ENCODE measurements at regions of chr11 and their contacts with region 1.

Region 1: DNA sequence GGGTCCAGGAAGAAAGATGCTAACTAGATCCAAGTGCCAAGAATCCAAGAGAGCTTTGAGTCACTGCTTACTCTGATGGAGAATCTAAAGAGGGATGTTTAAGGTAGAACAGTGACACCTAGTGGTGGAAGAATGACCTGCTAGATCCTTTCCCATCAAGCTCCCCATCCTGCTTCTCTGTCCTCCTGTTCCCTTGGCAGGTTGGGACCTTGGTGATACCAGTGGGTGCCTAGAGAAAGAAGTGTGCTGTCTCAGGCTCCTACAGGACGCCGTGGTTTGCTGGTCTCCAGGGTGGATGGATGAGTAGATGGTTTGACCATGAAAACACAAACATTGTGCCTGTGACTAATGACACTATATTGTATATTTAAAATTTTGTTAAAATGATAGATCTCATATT is 383.7 kb downstream of the TMEM135 start:
- DNase-seq: peak; percentile 44 to 60
- H3K4me3 ChIP-seq: no peak overlapping the region
- H3K27ac ChIP-seq: no peak overlapping the region
- H3K4me1 ChIP-seq: no peaks in the 10 kb centered on the region
- H3K27me3 ChIP-seq: no peaks in the 10 kb centered on the region
- CTCF ChIP-seq: peak; percentile 15 to 86 (median 54)
- EP300 ChIP-seq: no peak
- POLR2A ChIP-seq: no peak
- RAD21 ChIP-seq: peak; percentile 86 to 87

Region 2: GRCh38 chr11:86818466-86819192 is 602.8 kb before region 1 on chr11:
- CTCF ChIA-PET with region 1: no interaction called
- POLR2A ChIA-PET with region 1: no interaction called
- DNase-seq: no peak
- H3K4me3 ChIP-seq: no peak overlapping the region
- H3K27ac ChIP-seq: no peak overlapping the region
- H3K4me1 ChIP-seq: no peaks in the 10 kb centered on the region
- H3K27me3 ChIP-seq: no peaks in the 10 kb centered on the region
- CTCF ChIP-seq: peak in 2 of 3 experiments; percentile 64 to 79; a peak in 3 of 4 replicates
- EP300 ChIP-seq: no peak
- POLR2A ChIP-seq: no peak
- RAD21 ChIP-seq: peak; percentile 90

Region 3: DNA sequence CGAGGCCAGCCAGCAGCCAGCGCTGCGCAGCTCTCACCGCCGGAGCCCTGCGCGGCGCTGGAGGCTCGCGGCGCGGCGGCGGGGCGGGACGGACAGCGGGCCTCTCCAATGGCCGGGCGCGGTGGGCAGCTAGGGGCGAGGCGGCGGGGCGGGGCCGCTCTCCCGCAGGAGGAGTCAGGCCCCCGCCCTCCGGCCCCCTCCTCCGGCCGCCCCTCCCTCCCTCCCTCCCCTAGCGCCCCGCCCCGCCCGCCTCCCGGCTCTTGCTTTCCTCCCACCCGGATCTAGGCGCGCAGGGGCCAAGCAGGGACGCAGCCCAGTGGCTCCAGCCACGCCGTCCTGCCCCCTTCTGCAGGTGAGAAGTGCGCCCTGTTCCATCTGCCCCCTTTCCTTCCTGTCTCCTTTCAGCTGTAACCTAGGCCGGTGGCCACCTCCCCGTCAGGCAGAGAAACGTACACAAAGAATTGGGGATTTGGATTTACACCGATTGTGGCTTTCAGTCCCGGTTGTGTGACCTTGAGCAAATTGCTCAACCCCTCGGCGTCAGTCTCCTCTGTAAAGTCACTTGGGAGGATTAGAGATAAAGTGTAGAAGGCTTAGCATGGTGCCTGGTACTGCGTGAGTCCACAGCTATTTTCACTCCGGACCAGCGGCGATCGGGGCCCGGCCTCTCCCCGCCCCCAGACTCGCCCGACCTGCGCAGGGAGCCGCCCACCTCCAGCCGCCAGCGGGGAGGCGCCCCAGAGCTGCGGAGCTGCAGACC is 465.9 kb before region 1 on chr11 and contains the start of gene FZD4:
- CTCF ChIA-PET with region 1: interaction called, 13 read pairs
- POLR2A ChIA-PET with region 1: no interaction called
- DNase-seq: peak in 1 of 2 experiments; percentile 88
- H3K4me3 ChIP-seq: peak within 1 kb of the TSS; percentile 80 to 96 (median 81)
- H3K27ac ChIP-seq: no peak within 1 kb of the TSS; the same call in 1 of the 2 replicates
- H3K4me1 ChIP-seq: peaks cover 0 to 15% (median 10%) of the 10 kb centered on the region in 4 experiments; a peak in 4 of 7 replicates
- H3K27me3 ChIP-seq: peaks cover 5 to 10% (median 8%) of the 10 kb centered on the region in 4 experiments
- CTCF ChIP-seq: peak in 2 of 3 experiments; percentile 10 to 22; a peak in 3 of 4 replicates
- EP300 ChIP-seq: no peak
- POLR2A ChIP-seq: peak; percentile 59 to 61; a peak in 2 of 3 replicates
- RAD21 ChIP-seq: peak; percentile 45 to 52; a peak in 3 of 4 replicates
- total RNA-seq, gene FZD4: 6.8 and 7.1 TPM in 2 replicates

Region 4: GRCh38 chr11:87352759-87353707 is 68.4 kb before region 1 on chr11:
- CTCF ChIA-PET with region 1: interaction called, 192 read pairs
- POLR2A ChIA-PET with region 1: no interaction called
- DNase-seq: peak; percentile 61 to 99
- H3K4me3 ChIP-seq: no peak overlapping the region
- H3K27ac ChIP-seq: no peak overlapping the region
- H3K4me1 ChIP-seq: no peaks in the 10 kb centered on the region
- H3K27me3 ChIP-seq: no peaks in the 10 kb centered on the region
- CTCF ChIP-seq: peak; percentile 86 to 98 (median 95)
- EP300 ChIP-seq: no peak
- POLR2A ChIP-seq: no peak
- RAD21 ChIP-seq: peak; percentile 99

Region 5: GRCh38 chr11:87398931-87399330 is 22.5 kb before region 1 on chr11:
- CTCF ChIA-PET with region 1: interaction called, 13 read pairs
- POLR2A ChIA-PET with region 1: no interaction called
- DNase-seq: no peak
- H3K4me3 ChIP-seq: no peak overlapping the region
- H3K27ac ChIP-seq: no peak overlapping the region
- H3K4me1 ChIP-seq: peaks cover 0 to 2% (median 0%) of the 10 kb centered on the region in 4 experiments; a peak in 1 of 7 replicates
- H3K27me3 ChIP-seq: no peaks in the 10 kb centered on the region
- CTCF ChIP-seq: no peak
- EP300 ChIP-seq: no peak
- POLR2A ChIP-seq: no peak
- RAD21 ChIP-seq: no peak

Region 6: DNA sequence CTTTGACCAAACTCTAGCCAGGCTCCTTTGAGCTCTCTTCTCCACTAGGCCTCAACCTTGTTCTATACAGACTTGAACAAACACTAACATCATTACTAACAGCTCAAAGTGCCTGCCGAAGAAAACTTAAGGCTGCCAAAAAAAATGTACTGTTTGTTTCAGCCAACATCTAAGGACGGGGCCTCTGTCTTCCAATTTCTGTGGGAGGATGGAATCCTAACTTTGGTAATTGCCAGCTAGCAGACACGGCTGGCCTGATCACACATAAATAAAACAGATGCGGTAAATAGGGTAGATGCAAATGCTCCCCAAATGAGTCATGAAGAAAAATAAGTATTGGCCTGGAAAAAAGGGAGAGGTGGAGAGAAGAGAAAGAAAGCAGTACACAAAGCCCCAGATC is 10.6 kb after region 1 on chr11:
- CTCF ChIA-PET with region 1: interaction called, 22 read pairs
- POLR2A ChIA-PET with region 1: no interaction called
- DNase-seq: no peak
- H3K4me3 ChIP-seq: no peak overlapping the region
- H3K27ac ChIP-seq: no peak overlapping the region
- H3K4me1 ChIP-seq: no peaks in the 10 kb centered on the region
- H3K27me3 ChIP-seq: no peaks in the 10 kb centered on the region
- CTCF ChIP-seq: no peak
- EP300 ChIP-seq: no peak
- POLR2A ChIP-seq: no peak
- RAD21 ChIP-seq: no peak